Spleen (tissue), 13 donors: ENCODE measurements at regions of chr12 and their contacts with region 1.

Region 1: DNA sequence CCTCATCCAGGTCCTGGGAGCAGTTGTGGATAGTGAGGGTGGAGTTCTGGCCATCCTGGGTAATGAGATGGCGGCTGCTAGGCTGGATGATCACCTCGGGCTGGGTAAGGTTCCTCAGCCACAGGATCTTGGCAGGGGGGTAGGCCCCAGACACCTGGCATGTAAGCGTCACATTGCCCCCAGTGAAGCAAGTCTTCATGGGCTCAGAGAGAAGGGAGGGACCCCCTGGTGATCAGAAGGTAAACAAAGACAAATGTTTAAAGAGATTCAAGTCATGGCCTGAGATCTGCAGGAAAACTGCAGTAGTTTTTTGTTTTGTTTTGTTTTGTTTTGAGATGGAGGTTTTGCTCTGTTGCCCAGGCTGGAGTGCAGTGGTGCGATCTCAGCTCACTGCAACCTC is 12.8 kb upstream of the WSB2 start:
- DNase-seq: no peak
- H3K4me3 ChIP-seq: no peak overlapping the region
- H3K27ac ChIP-seq: no peak overlapping the region
- H3K4me1 ChIP-seq: peaks cover 0 to 3% (median 0%) of the 10 kb centered on the region in 6 donors
- H3K27me3 ChIP-seq: no peaks in the 10 kb centered on the region
- CTCF ChIP-seq: no peak
- POLR2A ChIP-seq: no peak

Region 2: GRCh38 chr12:118120579-118121363 is 47.0 kb after region 1 on chr12:
- intact Hi-C with region 1: loop called (anchors 2 kb)
- DNase-seq: peak; percentile 86
- H3K4me3 ChIP-seq: no peak overlapping the region
- H3K27ac ChIP-seq: peak overlapping the region in 7 of 8 donors; percentile 23 to 65 (median 43)
- H3K4me1 ChIP-seq: peaks cover 4 to 13% (median 7%) of the 10 kb centered on the region in 6 donors
- H3K27me3 ChIP-seq: no peaks in the 10 kb centered on the region
- CTCF ChIP-seq: peak in 8 of 11 experiments; percentile 18 to 89 (median 80)
- POLR2A ChIP-seq: no peak